Psoas muscle (tissue), 8 donors: ENCODE measurements at regions of chrX and their contacts with region 1.

Region 1: GRCh38 chrX:149962859-149963757 is 24.8 kb upstream of the EOLA2 start:
- DNase-seq: peak; percentile 35 to 54
- ATAC-seq: peak; percentile 87 to 94 (median 92)
- H3K4me3 ChIP-seq: no peak overlapping the region
- H3K27ac ChIP-seq: no peak overlapping the region
- H3K4me1 ChIP-seq: no peaks in the 10 kb centered on the region
- H3K27me3 ChIP-seq: no peaks in the 10 kb centered on the region
- CTCF ChIP-seq: peak; percentile 69

Region 2: GRCh38 chrX:150084496-150085229 is 121.6 kb after region 1 on chrX:
- intact Hi-C with region 1: no loop called
- DNase-seq: no peak
- ATAC-seq: no peak
- H3K4me3 ChIP-seq: no peak overlapping the region
- H3K27ac ChIP-seq: no peak overlapping the region
- H3K4me1 ChIP-seq: no peaks in the 10 kb centered on the region
- H3K27me3 ChIP-seq: no peaks in the 10 kb centered on the region
- CTCF ChIP-seq: no peak

Region 3: DNA sequence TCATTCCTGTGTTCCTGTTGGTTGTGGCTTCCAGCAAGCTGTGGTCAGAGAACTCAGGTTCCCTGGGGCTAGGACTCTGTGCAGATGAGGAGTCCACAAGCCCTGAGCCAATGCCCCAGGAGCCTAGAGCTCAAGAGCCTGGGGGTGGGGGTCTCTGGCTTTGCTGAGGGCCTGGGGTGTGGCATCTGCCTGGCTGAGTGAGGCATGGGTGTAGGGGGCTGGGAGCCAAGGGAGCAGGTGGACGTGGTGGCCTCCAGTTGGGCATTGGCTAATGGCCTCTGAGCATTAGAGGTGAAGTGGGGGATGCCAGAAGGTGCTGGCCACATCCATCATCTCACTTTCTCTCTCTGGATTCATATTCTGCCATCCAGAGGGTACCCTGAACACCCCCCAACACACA is 394.7 kb after region 1 on chrX:
- intact Hi-C with region 1: loop called (anchors 5 to 10 kb)
- DNase-seq: no peak
- ATAC-seq: no peak
- H3K4me3 ChIP-seq: no peak overlapping the region
- H3K27ac ChIP-seq: no peak overlapping the region
- H3K4me1 ChIP-seq: no peaks in the 10 kb centered on the region
- H3K27me3 ChIP-seq: peaks cover 0 to 10% (median 0%) of the 10 kb centered on the region in 3 donors
- CTCF ChIP-seq: no peak

Region 4: GRCh38 chrX:150486011-150486410 is 522.9 kb after region 1 on chrX:
- intact Hi-C with region 1: loop called (anchors 5 to 10 kb)
- DNase-seq: peak; percentile 28 to 61
- ATAC-seq: peak; percentile 63 to 88 (median 78)
- H3K4me3 ChIP-seq: no peak overlapping the region
- H3K27ac ChIP-seq: no peak overlapping the region
- H3K4me1 ChIP-seq: no peaks in the 10 kb centered on the region
- H3K27me3 ChIP-seq: no peaks in the 10 kb centered on the region
- CTCF ChIP-seq: peak; percentile 62

Region 5: GRCh38 chrX:150715184-150715583 is 752.1 kb after region 1 on chrX:
- intact Hi-C with region 1: loop called (anchors 10 kb)
- DNase-seq: no peak
- ATAC-seq: no peak
- H3K4me3 ChIP-seq: no peak overlapping the region
- H3K27ac ChIP-seq: no peak overlapping the region
- H3K4me1 ChIP-seq: no peaks in the 10 kb centered on the region
- H3K27me3 ChIP-seq: no peaks in the 10 kb centered on the region
- CTCF ChIP-seq: no peak